ENCODE measurements at regions of chr2 and their contacts with region 1.

Region 1: DNA sequence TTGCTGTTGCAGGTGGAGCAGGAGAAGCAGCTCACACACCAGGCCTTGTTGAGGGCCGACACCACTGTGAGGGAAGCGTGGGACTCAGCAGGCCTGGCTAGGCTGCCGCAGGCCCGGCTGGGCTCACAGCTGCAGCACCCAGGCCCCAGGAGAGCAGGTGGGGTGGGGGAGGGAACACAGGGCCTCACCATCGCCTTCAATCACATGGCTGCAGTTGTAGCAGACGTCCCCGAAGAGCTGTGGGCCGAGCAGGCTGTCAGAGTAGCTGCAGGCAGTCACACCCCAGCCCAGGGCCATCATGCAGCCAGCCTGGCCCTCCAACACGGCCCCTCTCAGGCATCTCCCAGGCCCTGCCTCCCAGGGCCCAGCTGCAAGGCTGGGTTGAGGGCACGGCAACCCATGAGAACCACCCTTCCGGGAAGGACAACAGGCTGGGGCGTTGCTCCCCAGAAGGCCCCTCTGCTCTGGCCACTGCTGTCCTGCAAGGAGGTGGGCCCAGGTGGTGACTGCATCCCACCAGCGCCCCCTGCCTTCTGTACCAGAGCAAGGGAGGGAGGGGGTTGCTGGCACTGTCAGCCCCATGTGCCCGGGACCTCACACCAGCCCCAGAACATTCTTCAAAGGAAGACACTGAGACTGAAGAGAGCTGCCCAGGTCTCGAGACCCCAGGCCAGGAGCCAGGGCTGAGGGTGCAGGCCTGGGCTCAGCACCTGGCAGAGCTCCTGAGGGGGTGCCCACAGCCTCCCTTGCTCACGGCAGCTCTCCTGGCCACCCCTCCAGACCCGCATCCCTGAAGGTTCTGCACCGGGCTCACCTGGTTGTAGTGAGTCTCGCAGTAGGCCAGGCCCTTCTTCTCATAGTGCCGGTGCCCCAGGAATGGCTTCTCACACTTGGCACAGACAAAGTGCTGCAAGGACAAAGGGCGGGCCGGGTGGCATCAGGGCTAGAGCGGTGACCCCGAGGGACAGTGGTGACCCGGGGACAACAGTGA is 5.6 kb upstream of the GPR17 start:
- DNase-seq: no peak
- H3K4me3 ChIP-seq: no peak overlapping the region
- H3K27ac ChIP-seq: peak overlapping the region in 1 of 2 donors; percentile 93
- H3K4me1 ChIP-seq: peaks cover 3% of the 10 kb centered on the region in 2 donors
- H3K27me3 ChIP-seq: no peaks in the 10 kb centered on the region
- CTCF ChIP-seq: no peak
- POLR2A ChIP-seq: no peak

Region 2: GRCh38 chr2:126467367-126468054 is 1172.9 kb before region 1 on chr2:
- intact Hi-C with region 1: loop called (anchors 5 kb)
- DNase-seq: no peak
- H3K4me3 ChIP-seq: no peak overlapping the region
- H3K27ac ChIP-seq: no peak overlapping the region
- H3K4me1 ChIP-seq: no peaks in the 10 kb centered on the region
- H3K27me3 ChIP-seq: no peaks in the 10 kb centered on the region
- CTCF ChIP-seq: no peak
- POLR2A ChIP-seq: no peak

Region 3: GRCh38 chr2:127563458-127564428 is 76.6 kb before region 1 on chr2:
- intact Hi-C with region 1: no loop called
- DNase-seq: no peak
- H3K4me3 ChIP-seq: no peak overlapping the region
- H3K27ac ChIP-seq: no peak overlapping the region
- H3K4me1 ChIP-seq: no peaks in the 10 kb centered on the region
- H3K27me3 ChIP-seq: no peaks in the 10 kb centered on the region
- CTCF ChIP-seq: no peak
- POLR2A ChIP-seq: no peak

Region 4: DNA sequence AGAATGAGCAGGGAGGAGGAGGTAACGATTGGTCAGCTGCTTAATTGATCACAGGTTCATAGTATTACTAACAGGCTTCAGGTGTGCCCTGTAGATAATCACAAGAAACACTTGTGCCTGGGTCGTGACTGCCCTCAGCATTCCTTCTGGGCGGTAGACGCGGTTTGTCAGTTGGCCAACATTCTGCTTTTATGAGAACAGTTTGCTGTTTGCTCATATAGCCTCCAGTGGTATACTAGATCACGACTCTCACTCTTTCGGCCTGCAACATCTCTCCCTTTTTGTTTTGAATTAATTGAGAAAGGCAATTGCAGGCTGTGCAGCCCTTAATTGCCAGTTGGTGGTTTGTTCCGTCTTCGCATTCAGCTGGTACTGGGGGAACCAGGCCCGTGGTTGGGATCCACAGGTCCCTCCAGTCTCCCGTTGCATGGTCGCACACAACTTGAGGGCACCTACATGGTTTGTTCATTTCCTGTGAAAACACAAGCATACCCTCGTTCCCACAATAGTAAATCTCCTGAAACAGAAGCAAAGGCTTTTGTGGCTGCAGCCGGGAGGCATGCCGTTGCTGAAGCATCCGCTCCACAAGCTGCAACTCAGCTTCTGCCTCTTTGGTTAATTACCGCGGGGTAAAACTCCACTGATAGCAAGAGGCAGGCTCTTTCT is 24.7 kb before region 1 on chr2:
- intact Hi-C with region 1: no loop called
- DNase-seq: peak in 1 of 2 donors; percentile 10
- H3K4me3 ChIP-seq: no peak overlapping the region
- H3K27ac ChIP-seq: no peak overlapping the region
- H3K4me1 ChIP-seq: no peaks in the 10 kb centered on the region
- H3K27me3 ChIP-seq: no peaks in the 10 kb centered on the region
- CTCF ChIP-seq: no peak
- POLR2A ChIP-seq: no peak

Region 5: GRCh38 chr2:128187032-128187654 is 546.8 kb after region 1 on chr2:
- intact Hi-C with region 1: no loop called
- DNase-seq: no peak
- H3K4me3 ChIP-seq: peak overlapping the region in 1 of 3 donors; percentile 7
- H3K27ac ChIP-seq: no peak overlapping the region
- H3K4me1 ChIP-seq: no peaks in the 10 kb centered on the region
- H3K27me3 ChIP-seq: no peaks in the 10 kb centered on the region
- CTCF ChIP-seq: no peak
- POLR2A ChIP-seq: no peak

Measured in breast epithelium (tissue), 4 donors.